Endothelial cell of umbilical vein (primary cell): ENCODE measurements at regions of chr2 and their contacts with region 1.

Region 1: GRCh38 chr2:112433932-112434730 is 686 bp upstream of the RGPD8 start:
- DNase-seq: no peak
- H3K4me3 ChIP-seq: no peak overlapping the region
- H3K27ac ChIP-seq: no peak overlapping the region
- H3K4me1 ChIP-seq: no peaks in the 10 kb centered on the region
- H3K27me3 ChIP-seq: no peaks in the 10 kb centered on the region
- CTCF ChIP-seq: no peak
- POLR2A ChIP-seq: no peak

Region 2: GRCh38 chr2:112092286-112093041 is 341.7 kb before region 1 on chr2:
- CTCF ChIA-PET with region 1: no interaction called
- POLR2A ChIA-PET with region 1: no interaction called
- dilution Hi-C with region 1: no loop called
- intact Hi-C with region 1: no loop called
- DNase-seq: peak; percentile 89
- H3K4me3 ChIP-seq: no peak overlapping the region
- H3K27ac ChIP-seq: peak overlapping the region; percentile 90
- H3K4me1 ChIP-seq: peaks cover 30% of the 10 kb centered on the region
- H3K27me3 ChIP-seq: no peaks in the 10 kb centered on the region
- CTCF ChIP-seq: no peak
- POLR2A ChIP-seq: peak; percentile 15

Region 3: GRCh38 chr2:112216166-112216565 is 218.0 kb before region 1 on chr2:
- CTCF ChIA-PET with region 1: interaction called, 11 read pairs
- POLR2A ChIA-PET with region 1: no interaction called
- dilution Hi-C with region 1: no loop called
- intact Hi-C with region 1: no loop called
- DNase-seq: peak; percentile 30
- H3K4me3 ChIP-seq: no peak overlapping the region
- H3K27ac ChIP-seq: no peak overlapping the region
- H3K4me1 ChIP-seq: peaks cover 5% of the 10 kb centered on the region
- H3K27me3 ChIP-seq: no peaks in the 10 kb centered on the region
- CTCF ChIP-seq: peak in 1 of 2 donors; percentile 15
- POLR2A ChIP-seq: no peak

Region 4: GRCh38 chr2:112254466-112255239 is 179.5 kb before region 1 on chr2 and contains the start of gene ZC3H8:
- CTCF ChIA-PET with region 1: interaction called, 16 read pairs
- POLR2A ChIA-PET with region 1: interaction called, 3 read pairs
- dilution Hi-C with region 1: no loop called
- intact Hi-C with region 1: loop called (anchors 5 kb)
- DNase-seq: peak; percentile 89
- H3K4me3 ChIP-seq: peak within 1 kb of the TSS; percentile 49 to 89 (median 82)
- H3K27ac ChIP-seq: peak within 1 kb of the TSS; percentile 65
- H3K4me1 ChIP-seq: peaks cover 13% of the 10 kb centered on the region
- H3K27me3 ChIP-seq: no peaks in the 10 kb centered on the region
- CTCF ChIP-seq: no peak
- POLR2A ChIP-seq: peak; percentile 90
- total RNA-seq, gene ZC3H8: 7.1 and 7.8 TPM in 2 replicates

Region 5: DNA sequence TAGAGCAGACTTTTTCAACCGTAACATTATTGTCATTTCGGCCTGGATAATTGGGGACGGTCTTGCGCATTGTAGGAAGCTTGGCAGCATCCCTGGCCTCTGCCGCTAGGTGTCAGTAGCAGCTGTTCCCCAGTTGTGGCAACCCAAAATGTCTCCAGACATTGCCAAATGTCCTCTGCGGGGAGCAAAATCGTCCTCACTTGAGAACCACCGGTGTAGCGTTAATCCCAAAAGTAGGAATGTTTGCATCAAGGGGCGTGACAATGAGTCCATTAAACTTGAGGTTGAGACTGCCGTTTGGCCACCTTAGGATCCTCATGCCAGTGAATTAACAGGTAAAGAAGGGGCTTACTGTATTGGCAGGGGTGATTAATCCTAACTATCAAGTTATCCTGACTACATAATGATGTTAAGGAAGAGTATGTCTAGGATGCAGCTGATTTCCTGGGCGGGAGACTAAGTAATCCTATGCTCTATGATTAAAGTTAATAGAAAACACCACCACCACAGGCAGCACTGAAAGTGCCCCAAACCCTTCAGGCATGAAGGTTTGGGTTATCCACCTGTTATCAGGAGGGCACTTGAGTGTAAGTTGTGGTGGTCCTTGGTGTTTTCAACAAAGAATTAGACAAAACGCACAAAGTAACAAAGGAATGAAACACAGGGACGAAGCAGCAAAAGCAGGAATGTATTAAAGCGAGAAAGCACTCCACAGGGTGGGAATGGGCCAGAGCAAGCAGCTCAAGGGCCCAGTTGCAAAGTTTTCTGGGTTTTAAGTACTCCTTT is 174.4 kb before region 1 on chr2:
- CTCF ChIA-PET with region 1: interaction called, 16 read pairs
- POLR2A ChIA-PET with region 1: interaction called, 3 read pairs
- dilution Hi-C with region 1: no loop called
- intact Hi-C with region 1: loop called (anchors 5 kb)
- DNase-seq: peak; percentile 83
- H3K4me3 ChIP-seq: no peak overlapping the region
- H3K27ac ChIP-seq: no peak overlapping the region
- H3K4me1 ChIP-seq: peaks cover 7% of the 10 kb centered on the region
- H3K27me3 ChIP-seq: no peaks in the 10 kb centered on the region
- CTCF ChIP-seq: peak; percentile 95 to 97
- POLR2A ChIP-seq: no peak